ENCODE measurements at regions of chr6 and their contacts with region 1.

Region 1: GRCh38 chr6:129498950-129499842 is 210.8 kb downstream of the ARHGAP18 start:
- DNase-seq: no peak
- H3K4me3 ChIP-seq: peak overlapping the region; percentile 2; the same call in 1 of the 2 replicates
- H3K27me3 ChIP-seq: no peaks in the 10 kb centered on the region
- CTCF ChIP-seq: peak; percentile 50

Region 2: DNA sequence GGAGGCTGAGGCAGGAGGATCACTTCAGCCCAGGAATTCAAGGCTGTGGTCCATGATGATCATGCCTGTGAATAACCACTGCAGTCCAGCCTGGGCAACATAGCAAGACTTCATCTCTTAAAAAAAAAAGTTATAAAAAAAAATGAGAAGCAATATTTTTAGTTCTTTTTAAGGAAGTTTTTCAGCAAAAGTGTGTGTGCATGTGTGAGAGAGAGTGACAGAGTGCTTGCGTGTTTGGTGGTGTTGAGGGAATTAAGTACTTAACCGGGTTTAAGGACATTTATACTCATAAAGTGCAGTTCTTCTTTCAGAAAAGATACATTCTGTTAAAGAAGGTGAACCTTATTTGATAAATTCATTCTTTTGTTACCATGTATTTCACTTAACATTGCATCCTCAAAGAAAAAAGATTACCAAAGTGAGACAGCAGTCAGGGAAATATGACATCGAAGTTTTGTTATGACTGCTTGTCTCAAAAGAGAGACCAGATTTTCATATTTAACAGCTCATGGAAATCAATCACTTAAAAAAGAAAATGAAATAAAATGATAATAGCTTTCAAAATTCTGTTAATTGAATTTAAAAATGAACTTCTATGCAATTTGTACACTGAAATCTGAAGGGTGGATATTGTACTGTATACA is 43.9 kb before region 1 on chr6:
- CTCF ChIA-PET with region 1: no interaction called
- POLR2A ChIA-PET with region 1: no interaction called
- DNase-seq: no peak
- H3K4me3 ChIP-seq: no peak overlapping the region
- H3K27me3 ChIP-seq: no peaks in the 10 kb centered on the region
- CTCF ChIP-seq: no peak

Region 3: DNA sequence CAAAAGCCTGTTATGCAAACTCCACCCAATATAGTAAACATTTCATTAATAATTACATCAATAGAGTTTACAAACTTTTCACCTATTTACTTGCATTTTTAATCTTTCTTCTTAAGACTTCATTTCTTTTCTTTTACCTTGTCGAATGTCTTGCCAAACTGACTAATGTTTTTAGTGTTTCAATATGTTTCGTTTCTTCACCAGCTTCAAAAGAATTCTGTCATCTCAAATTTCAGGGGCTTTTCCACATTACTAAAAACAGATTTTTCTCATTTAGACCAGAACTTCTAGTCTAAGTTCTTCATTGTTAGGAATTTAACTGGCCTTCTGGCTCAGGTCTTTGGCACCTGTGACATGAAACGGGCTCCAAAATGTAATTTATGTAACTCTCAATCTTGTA is 14.3 kb after region 1 on chr6:
- CTCF ChIA-PET with region 1: interaction called, 10 read pairs
- POLR2A ChIA-PET with region 1: no interaction called
- DNase-seq: peak; percentile 60
- H3K4me3 ChIP-seq: no peak overlapping the region
- H3K27me3 ChIP-seq: no peaks in the 10 kb centered on the region
- CTCF ChIP-seq: no peak

Region 4: GRCh38 chr6:129567374-129567773 is 68.2 kb after region 1 on chr6:
- CTCF ChIA-PET with region 1: interaction called, 27 read pairs
- POLR2A ChIA-PET with region 1: no interaction called
- DNase-seq: no peak
- H3K4me3 ChIP-seq: no peak overlapping the region
- H3K27me3 ChIP-seq: no peaks in the 10 kb centered on the region
- CTCF ChIP-seq: peak; percentile 39

Region 5: GRCh38 chr6:129575378-129576118 is 76.4 kb after region 1 on chr6:
- CTCF ChIA-PET with region 1: interaction called, 15 read pairs
- POLR2A ChIA-PET with region 1: no interaction called
- DNase-seq: peak; percentile 8
- H3K4me3 ChIP-seq: no peak overlapping the region
- H3K27me3 ChIP-seq: no peaks in the 10 kb centered on the region
- CTCF ChIP-seq: peak; percentile 75

Region 6: GRCh38 chr6:129598244-129599187 is 99.3 kb after region 1 on chr6:
- CTCF ChIA-PET with region 1: interaction called, 16 read pairs
- POLR2A ChIA-PET with region 1: no interaction called
- DNase-seq: no peak
- H3K4me3 ChIP-seq: no peak overlapping the region
- H3K27me3 ChIP-seq: no peaks in the 10 kb centered on the region
- CTCF ChIP-seq: peak; percentile 62

Measured in BJ (cell line).